Natural killer cell (primary cell): ENCODE measurements at regions of chr19 and their contacts with region 1.

Region 1: GRCh38 chr19:11587302-11587974 is 9.8 kb upstream of the ZNF627 start:
- DNase-seq: peak; percentile 76 to 86
- ATAC-seq: peak; percentile 93 to 100 (median 98)
- H3K4me3 ChIP-seq: no peak overlapping the region
- H3K4me3 Mint-ChIP-seq: no peak overlapping the region
- H3K27ac ChIP-seq: no peak overlapping the region
- H3K27ac Mint-ChIP-seq: peak overlapping the region in 1 of 2 donors; percentile 71
- H3K4me1 ChIP-seq: peaks cover 23% of the 10 kb centered on the region
- H3K4me1 Mint-ChIP-seq: peaks cover 5 to 10% of the 10 kb centered on the region in 2 donors
- H3K27me3 ChIP-seq: no peaks in the 10 kb centered on the region
- H3K27me3 Mint-ChIP-seq: no peaks in the 10 kb centered on the region
- CTCF ChIP-seq: peak; percentile 84

Region 2: DNA sequence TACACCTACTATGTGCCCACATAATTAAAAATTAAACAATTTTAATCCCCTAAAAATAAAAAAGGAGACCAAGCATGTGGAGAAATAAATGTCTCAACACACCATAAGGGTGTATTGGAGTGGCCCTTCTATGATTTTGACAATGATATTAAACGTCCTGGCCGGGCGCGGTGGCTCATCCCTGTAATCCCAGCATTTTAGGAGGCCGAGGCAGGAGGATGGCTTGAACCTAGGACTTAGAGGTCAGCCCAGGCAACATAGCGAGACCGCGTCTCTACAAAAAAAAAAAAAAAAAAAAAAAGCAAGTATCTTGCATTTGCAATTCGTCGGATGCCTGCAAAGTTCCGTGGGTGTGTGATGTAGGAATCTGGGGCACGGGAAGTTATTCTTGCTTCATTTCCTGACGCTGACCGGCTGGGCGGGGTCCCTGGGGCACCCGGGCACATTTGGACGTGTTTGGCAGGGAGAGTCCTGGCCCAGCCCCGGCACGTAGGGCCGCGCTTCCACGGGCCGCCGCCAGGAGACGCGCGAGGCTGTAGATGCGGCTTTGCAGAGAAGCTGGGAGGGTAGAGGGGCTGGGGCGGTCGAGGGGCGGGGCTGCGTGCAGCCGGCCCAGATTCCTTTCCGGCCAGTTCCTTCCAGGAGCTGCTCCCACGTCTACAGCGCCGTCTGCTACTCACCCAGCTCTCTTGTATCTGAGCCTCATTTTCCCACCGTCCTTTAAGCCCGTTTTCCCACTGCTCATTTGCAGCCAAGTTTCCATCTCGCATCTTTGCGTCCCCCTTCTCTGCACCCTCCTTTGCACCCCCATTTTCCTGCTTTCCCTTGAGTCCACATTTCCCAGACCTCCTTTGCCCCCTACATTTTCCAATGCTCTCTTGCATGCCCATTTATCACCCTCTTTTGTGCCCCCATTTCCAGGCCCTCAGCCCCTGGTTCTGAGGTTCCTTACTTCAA is 293.7 kb before region 1 on chr19:
- intact Hi-C with region 1: loop called (anchors 5 kb)
- DNase-seq: peak; percentile 77 to 81
- ATAC-seq: peak; percentile 94 to 100 (median 99)
- H3K4me3 ChIP-seq: no peak overlapping the region
- H3K4me3 Mint-ChIP-seq: no peak overlapping the region
- H3K27ac ChIP-seq: no peak overlapping the region
- H3K27ac Mint-ChIP-seq: no peak overlapping the region
- H3K4me1 ChIP-seq: peaks cover 10% of the 10 kb centered on the region
- H3K4me1 Mint-ChIP-seq: peaks cover 0 to 10% of the 10 kb centered on the region in 2 donors
- H3K27me3 ChIP-seq: no peaks in the 10 kb centered on the region
- H3K27me3 Mint-ChIP-seq: peaks cover 8 to 11% of the 10 kb centered on the region in 2 donors
- CTCF ChIP-seq: peak; percentile 90

Region 3: DNA sequence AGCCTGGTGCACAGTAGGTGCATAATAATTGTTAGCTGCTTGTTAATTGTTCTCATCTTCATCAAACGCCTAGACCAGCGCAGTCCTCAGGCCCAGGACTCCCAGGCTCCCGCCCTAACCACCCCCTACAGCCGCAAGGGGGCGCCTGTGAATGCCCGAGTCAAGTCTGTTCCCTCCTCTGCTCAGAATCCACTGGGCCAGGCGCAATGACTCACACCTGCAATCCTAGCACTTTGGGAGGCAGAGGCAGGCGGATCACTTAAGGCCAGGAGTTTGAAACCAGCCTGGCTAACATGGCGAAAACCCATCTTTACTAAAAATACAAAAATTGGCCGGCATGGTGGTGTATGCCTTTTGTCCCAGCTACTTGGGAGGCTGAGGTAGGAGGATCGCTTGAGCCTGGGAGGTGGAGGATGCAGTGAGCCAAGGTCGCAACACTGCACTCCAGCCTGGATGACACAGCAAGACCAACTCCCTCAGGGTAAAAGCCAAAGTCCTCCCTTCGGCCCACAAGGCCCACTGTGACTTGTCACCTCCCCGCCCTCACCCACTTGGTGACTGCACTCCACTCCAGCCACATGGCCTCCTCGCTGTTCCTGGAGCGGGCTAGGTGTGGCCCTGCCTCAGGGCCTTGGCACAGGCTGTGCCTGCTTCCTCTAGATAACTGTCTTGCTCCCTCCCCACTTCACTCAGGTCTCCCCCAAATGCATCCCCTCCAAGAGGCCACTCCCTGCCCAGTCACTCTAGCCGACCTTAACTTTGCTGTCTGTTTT is 90.9 kb before region 1 on chr19:
- intact Hi-C with region 1: loop called (anchors 2 kb)
- DNase-seq: peak; percentile 44 to 75
- ATAC-seq: peak; percentile 49 to 70 (median 57)
- H3K4me3 ChIP-seq: no peak overlapping the region
- H3K4me3 Mint-ChIP-seq: no peak overlapping the region
- H3K27ac ChIP-seq: no peak overlapping the region
- H3K27ac Mint-ChIP-seq: no peak overlapping the region
- H3K4me1 ChIP-seq: no peaks in the 10 kb centered on the region
- H3K4me1 Mint-ChIP-seq: no peaks in the 10 kb centered on the region
- H3K27me3 ChIP-seq: no peaks in the 10 kb centered on the region
- H3K27me3 Mint-ChIP-seq: no peaks in the 10 kb centered on the region
- CTCF ChIP-seq: peak; percentile 36

Region 4: DNA sequence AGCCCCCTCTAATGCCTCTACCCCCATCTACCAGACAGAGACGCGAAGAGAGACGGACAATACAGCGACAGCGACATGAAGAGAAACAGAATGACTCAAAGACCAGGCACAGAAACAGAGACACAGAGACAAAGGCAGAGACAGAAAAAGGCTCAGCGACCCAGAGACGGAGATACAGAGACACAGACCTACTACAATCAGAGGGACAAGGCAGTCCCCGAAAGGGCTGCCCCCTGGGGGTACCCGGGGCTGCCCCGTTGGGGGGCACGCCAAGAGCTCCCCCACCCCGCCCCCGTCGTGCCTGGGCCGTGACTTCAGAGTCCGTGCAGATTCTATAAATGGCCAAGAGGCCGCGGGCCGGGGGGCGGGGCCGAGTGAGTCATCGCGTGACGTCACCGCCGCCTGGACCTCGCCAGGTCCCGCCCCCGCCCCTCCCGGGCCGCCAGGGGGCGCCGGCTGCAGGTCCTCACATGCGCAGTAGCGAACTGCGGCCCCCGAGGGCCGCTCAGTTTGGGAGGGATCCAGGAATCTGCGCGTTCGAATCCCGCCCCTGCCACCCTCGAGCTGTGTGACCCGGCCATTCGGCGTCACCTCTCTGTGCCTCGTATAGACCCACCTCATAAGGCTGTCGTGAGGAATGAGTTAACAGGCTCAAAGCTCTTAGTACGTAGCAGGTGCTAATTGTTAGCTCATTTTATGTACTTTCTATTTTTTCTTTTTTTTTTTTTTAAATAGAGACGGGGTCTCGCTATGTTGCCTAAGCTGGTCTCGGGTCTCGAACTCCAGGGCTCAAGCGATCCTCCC is 51.4 kb before region 1 on chr19:
- intact Hi-C with region 1: loop called (anchors 1 kb)
- DNase-seq: peak; percentile 90 to 94
- ATAC-seq: peak; percentile 91 to 95 (median 94)
- H3K4me3 ChIP-seq: peak overlapping the region; percentile 5
- H3K4me3 Mint-ChIP-seq: peak overlapping the region; percentile 67
- H3K27ac ChIP-seq: peak overlapping the region; percentile 60
- H3K27ac Mint-ChIP-seq: peak overlapping the region; percentile 75 to 88
- H3K4me1 ChIP-seq: peaks cover 12% of the 10 kb centered on the region
- H3K4me1 Mint-ChIP-seq: peaks cover 8 to 16% of the 10 kb centered on the region in 2 donors
- H3K27me3 ChIP-seq: peaks cover 5% of the 10 kb centered on the region
- H3K27me3 Mint-ChIP-seq: peaks cover 12 to 16% of the 10 kb centered on the region in 2 donors
- CTCF ChIP-seq: peak; percentile 93

Region 5: DNA sequence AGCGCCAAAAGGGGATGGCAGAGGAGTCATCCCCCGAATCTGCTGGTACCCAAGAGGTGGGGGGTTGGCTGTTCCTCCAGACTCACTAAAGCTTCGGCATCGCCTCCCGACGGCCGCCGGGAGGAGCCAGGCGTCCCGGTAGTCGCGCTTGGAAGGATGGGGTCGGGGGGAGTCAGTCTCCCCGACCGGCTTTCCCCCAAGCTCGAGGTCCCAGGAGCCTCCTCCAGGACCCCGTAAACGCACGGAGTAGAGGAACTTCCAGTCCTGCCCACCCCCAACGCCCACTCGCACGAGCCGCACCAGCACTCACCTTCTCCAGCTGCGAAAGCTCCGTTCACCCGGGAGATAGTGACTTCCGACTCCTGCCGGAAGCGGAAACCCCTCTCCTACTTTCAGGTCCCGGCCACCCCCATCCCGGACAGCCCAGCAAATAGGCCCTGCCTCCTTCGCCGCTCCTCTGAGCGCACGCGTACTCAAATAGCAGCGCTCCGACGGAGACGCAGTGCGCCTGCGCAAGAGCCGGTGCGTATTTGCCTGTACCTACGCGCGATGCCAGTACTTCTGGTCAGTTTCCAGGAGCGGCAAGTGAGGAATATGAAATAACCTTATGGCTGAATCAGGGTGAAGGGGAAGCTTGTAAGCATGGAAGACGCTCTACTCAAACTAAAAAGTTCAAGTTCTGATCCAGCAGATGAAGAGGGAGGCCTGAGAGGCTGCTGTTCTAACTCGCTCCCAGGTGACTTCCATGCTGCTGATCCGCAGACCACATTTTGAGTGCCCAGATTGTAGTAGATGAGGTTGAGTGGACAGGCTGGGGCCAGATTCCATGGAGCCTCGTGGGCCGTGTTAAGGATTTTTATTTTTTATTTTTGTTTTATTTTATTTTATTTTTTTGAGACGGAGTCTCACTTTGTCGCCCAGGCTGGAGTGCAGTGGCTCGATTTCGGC is 28.3 kb before region 1 on chr19 and contains the start of gene ELOF1:
- intact Hi-C with region 1: loop called (anchors 1 kb)
- DNase-seq: peak; percentile 90 to 99
- ATAC-seq: peak; percentile 94 to 96 (median 95)
- H3K4me3 ChIP-seq: peak within 1 kb of the TSS; percentile 73
- H3K4me3 Mint-ChIP-seq: peak within 1 kb of the TSS; percentile 98
- H3K27ac ChIP-seq: peak within 1 kb of the TSS; percentile 82
- H3K27ac Mint-ChIP-seq: peak within 1 kb of the TSS; percentile 92 to 96
- H3K4me1 ChIP-seq: peaks cover 28% of the 10 kb centered on the region
- H3K4me1 Mint-ChIP-seq: peaks cover 28 to 43% of the 10 kb centered on the region in 2 donors
- H3K27me3 ChIP-seq: no peaks in the 10 kb centered on the region
- H3K27me3 Mint-ChIP-seq: no peaks in the 10 kb centered on the region
- CTCF ChIP-seq: no peak
- total RNA-seq, gene ELOF1: 46.4 to 54.2 (median 50.0) TPM

Region 6: GRCh38 chr19:11766597-11767591 is 179.5 kb after region 1 on chr19 and contains the start of gene ZNF441:
- intact Hi-C with region 1: no loop called
- DNase-seq: peak; percentile 89 to 95
- ATAC-seq: peak; percentile 92 to 97 (median 96)
- H3K4me3 ChIP-seq: peak within 1 kb of the TSS; percentile 65
- H3K4me3 Mint-ChIP-seq: peak within 1 kb of the TSS; percentile 98
- H3K27ac ChIP-seq: peak within 1 kb of the TSS; percentile 83
- H3K27ac Mint-ChIP-seq: peak within 1 kb of the TSS; percentile 91 to 98
- H3K4me1 ChIP-seq: peaks cover 19% of the 10 kb centered on the region
- H3K4me1 Mint-ChIP-seq: peaks cover 28 to 30% of the 10 kb centered on the region in 2 donors
- H3K27me3 ChIP-seq: no peaks in the 10 kb centered on the region
- H3K27me3 Mint-ChIP-seq: peaks cover 0 to 3% of the 10 kb centered on the region in 2 donors
- CTCF ChIP-seq: no peak
- total RNA-seq, gene ZNF441: 6.5 to 9.6 (median 7.1) TPM